ENCODE measurements at regions of chr2 and their contacts with region 1.

Region 1: GRCh38 chr2:75466708-75467311 is 93.9 kb downstream of the EVA1A start:
- DNase-seq: peak; percentile 24
- CTCF ChIP-seq: peak; percentile 50

Region 2: DNA sequence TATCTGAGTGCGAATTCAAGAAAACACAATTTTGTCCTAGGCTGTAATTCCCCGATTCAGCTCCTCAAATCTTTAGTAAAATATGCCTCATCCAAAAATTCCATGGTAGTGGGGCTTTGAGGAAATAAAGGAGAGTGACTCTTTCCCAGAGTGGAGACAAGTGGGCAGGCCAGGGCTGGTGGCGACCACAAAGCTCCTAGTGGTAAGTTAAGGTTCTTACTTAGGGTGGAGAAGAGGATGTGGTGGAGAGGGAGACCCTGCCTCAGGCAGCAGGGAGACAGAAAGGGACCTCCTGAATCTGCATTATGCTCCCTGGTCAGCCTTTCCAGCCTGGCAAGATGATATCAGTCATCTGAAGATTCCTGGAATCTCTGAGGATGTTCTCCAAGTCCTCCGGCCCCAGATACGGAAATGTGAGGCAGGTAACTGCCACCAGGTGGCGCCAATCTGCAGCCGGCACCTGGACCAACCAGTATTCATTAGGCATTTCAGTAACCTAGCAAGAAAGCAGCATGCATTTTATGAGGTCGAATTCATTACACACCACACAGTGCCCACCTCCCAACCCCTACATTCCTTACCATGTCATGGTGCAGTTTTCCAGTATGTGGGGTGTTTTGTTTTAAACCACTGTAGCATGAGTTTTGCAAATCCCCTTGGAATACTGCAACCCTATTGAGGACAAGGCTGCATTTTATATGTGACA is 402.0 kb before region 1 on chr2:
- in situ Hi-C with region 1: loop called (anchors 25 kb)
- DNase-seq: peak; percentile 53
- CTCF ChIP-seq: peak; percentile 62

Region 3: DNA sequence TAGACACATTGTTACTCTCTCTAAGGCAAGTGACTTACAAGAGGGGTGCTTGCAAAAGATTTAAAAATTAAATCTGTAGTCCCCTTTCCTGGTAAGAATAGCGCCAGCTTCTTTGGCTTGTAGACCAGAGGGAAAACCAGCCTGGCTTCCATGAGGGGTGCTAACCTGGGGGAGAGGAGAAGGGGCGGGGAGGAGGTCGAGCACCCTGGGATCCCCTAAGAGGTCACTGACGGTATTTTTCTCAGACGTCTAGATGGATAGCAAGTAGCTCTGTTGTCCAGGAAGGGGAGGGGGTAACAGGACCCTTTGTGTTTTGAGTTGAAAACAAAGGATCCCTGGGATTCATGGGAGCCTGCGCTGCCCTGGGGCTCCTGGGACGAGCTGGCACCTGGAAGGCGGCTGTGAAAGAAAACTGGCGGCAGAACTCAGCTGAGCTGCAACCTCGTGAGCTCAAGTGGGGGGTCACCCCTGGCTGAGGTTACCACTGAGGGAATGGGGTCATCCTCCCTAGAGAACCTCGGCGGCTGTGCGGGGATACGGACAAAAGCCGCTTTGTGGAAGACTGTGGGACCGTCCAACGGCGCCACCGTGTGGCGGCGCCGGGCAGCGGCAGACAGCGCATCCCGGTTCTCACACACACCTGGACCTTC is 142.0 kb after region 1 on chr2:
- in situ Hi-C with region 1: loop called (anchors 10 kb)
- DNase-seq: peak; percentile 81
- CTCF ChIP-seq: peak; percentile 96

Region 4: GRCh38 chr2:76310894-76311630 is 844.3 kb after region 1 on chr2:
- in situ Hi-C with region 1: no loop called
- DNase-seq: no peak
- CTCF ChIP-seq: no peak